ENCODE measurements at regions of chr15 and their contacts with region 1.

Region 1: DNA sequence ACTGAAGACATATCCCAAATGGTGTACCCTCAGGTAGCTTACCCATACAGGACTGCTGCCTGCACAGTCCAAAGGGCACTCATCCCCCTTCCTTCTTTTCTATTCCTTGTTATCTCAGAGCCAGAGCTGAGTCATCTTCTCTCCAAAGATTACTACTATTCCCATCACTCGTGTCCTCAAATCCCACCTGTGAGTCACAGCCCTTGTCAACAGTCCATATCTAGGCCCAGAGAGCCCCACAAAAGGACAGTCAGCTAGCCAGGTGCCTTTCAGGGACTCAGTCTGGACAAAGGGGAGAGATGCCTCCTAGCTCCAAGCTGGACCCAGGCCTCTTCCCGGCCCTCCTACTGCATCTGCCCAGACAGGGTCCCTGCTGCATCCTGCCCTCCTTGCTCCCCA is 11.0 kb downstream of the PARP16 start:
- DNase-seq: no peak
- H3K4me3 ChIP-seq: no peak overlapping the region
- H3K27ac ChIP-seq: no peak overlapping the region
- H3K4me1 ChIP-seq: no peaks in the 10 kb centered on the region
- H3K27me3 ChIP-seq: no peaks in the 10 kb centered on the region
- CTCF ChIP-seq: no peak
- POLR2A ChIP-seq: no peak

Region 2: DNA sequence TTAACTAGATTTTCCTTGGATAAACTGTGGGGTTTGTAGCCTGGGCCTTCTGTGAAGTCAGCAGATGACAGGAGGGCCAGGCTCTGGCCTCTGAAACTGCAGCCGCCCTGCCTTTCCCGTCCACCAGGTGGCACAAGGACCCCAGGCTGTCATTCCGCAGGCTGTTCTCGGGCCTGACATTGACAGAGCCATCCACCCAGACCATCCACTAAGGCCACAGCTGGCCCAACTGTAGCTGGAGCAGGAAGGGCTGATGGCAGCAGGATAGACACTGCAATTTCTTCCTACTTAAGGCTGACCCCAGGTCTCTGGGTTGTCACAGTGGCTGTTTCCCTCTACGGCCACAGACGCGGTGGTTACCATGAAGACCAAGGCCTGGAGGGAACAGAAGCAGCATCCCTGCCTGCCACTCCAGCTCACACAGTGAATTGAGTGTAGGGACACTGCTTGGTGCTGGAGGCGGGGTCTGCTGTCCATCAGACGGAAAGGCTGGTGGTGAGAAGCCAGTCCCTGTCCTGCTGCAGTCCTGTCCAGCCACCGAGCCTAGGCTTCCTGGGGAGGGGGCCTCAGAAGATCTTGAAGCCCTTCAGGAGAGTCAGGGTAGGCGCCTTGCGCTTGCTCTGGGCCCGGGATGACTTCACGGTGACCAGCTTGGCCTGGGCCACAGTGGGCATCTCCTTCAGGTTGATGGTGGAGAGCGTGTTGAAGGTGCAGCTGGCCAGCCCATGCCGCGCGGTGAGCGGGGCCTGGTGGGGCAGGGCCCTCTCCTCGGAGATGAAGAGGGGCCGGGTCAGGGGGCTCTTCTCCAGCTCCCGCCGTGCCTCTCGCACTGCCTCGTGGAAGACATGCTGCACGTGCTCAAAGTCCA is 221.2 kb before region 1 on chr15:
- CTCF ChIA-PET with region 1: interaction called, 3 read pairs
- POLR2A ChIA-PET with region 1: no interaction called
- dilution Hi-C with region 1: no loop called
- intact Hi-C with region 1: loop called (anchors 1 kb)
- DNase-seq: peak; percentile 61
- H3K4me3 ChIP-seq: no peak overlapping the region
- H3K27ac ChIP-seq: no peak overlapping the region
- H3K4me1 ChIP-seq: peaks cover 9% of the 10 kb centered on the region
- H3K27me3 ChIP-seq: no peaks in the 10 kb centered on the region
- CTCF ChIP-seq: peak; percentile 91 to 96
- POLR2A ChIP-seq: no peak

Region 3: GRCh38 chr15:65192016-65192415 is 83.7 kb before region 1 on chr15:
- CTCF ChIA-PET with region 1: interaction called, 15 read pairs
- POLR2A ChIA-PET with region 1: no interaction called
- dilution Hi-C with region 1: no loop called
- intact Hi-C with region 1: loop called (anchors 1 kb)
- DNase-seq: peak; percentile 24
- H3K4me3 ChIP-seq: no peak overlapping the region
- H3K27ac ChIP-seq: no peak overlapping the region
- H3K4me1 ChIP-seq: no peaks in the 10 kb centered on the region
- H3K27me3 ChIP-seq: peaks cover 0 to 2% of the 10 kb centered on the region in 2 experiments
- CTCF ChIP-seq: no peak
- POLR2A ChIP-seq: no peak

Region 4: DNA sequence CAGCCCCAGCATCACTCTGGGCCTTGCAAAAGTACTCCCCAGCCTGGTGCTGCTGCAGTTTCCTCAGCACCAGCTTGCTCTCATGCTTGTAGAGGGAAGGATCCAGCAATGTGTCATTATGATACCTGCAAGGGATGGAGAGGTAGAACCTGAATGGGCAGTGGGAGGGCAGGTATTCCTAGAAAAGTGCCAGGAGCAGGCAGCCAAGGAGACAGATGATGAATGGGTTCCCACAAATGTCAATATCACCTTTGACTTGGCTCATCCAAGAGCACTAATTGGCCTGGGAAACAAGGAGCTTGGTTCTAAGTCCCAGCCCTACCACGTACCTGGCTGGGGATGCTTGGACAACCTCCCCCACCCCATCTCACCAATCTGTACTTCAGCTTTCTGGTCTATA is 73.8 kb before region 1 on chr15:
- CTCF ChIA-PET with region 1: interaction called, 11 read pairs
- POLR2A ChIA-PET with region 1: no interaction called
- dilution Hi-C with region 1: no loop called
- intact Hi-C with region 1: no loop called
- DNase-seq: no peak
- H3K4me3 ChIP-seq: no peak overlapping the region
- H3K27ac ChIP-seq: no peak overlapping the region
- H3K4me1 ChIP-seq: no peaks in the 10 kb centered on the region
- H3K27me3 ChIP-seq: peaks cover 0 to 3% of the 10 kb centered on the region in 2 experiments
- CTCF ChIP-seq: no peak
- POLR2A ChIP-seq: no peak

Region 5: GRCh38 chr15:65286704-65287519 is 11.2 kb after region 1 on chr15 and contains the start of gene PARP16:
- CTCF ChIA-PET with region 1: interaction called, 18 read pairs
- POLR2A ChIA-PET with region 1: no interaction called
- dilution Hi-C with region 1: no loop called
- intact Hi-C with region 1: no loop called
- DNase-seq: peak; percentile 85
- H3K4me3 ChIP-seq: peak within 1 kb of the TSS; percentile 65 to 75 (median 67)
- H3K27ac ChIP-seq: peak within 1 kb of the TSS; percentile 40
- H3K4me1 ChIP-seq: peaks cover 16% of the 10 kb centered on the region
- H3K27me3 ChIP-seq: peaks cover 2% of the 10 kb centered on the region in 2 experiments
- CTCF ChIP-seq: peak in 1 of 2 donors; percentile 11
- POLR2A ChIP-seq: peak; percentile 71
- total RNA-seq, gene PARP16: 6.0 and 6.3 TPM in 2 replicates